Sigmoid colon (tissue), 7 donors: ENCODE measurements at regions of chr19 and their contacts with region 1.

Region 1: DNA sequence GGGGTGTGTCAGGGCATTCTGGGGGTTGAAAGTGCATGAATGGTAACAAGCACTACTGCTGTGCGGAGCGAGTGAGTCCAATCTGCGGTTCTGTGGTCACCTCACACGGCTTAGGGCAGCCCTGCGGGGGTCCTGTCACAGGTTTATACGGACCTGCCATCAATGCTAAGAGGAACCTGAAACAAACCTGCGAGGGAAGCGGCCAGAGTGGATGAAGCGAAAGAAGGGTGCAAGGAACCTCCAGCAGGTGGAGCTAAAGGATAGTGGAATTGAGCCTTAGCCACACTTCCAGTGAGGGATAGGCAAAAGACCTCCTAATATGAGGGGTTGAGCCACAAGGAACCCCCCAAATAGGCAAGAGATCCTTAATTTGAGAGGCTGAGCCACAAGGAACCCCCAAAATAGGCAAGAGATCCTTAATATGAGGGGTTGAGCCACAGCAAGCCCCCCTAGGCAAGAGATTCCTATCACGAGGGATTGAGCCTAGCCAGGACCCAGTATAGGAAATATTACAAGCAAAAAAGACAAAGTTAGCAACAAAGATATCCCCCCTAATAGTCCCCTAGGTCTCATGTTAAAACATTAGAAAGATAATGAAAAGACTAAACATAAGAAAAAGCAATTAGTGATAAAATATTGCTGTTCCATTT is 6.3 kb upstream of the ZNF69 start:
- DNase-seq: no peak
- H3K4me3 ChIP-seq: no peak overlapping the region
- H3K27ac ChIP-seq: no peak overlapping the region
- H3K4me1 ChIP-seq: peaks cover 0 to 6% (median 3%) of the 10 kb centered on the region in 4 donors
- H3K27me3 ChIP-seq: no peaks in the 10 kb centered on the region
- CTCF ChIP-seq: peak; percentile 30 to 79 (median 71)
- EP300 ChIP-seq: no peak
- POLR2A ChIP-seq: no peak

Region 2: GRCh38 chr19:11924886-11925650 is 43.8 kb after region 1 on chr19 and contains the start of gene ZNF700:
- intact Hi-C with region 1: loop called (anchors 5 kb)
- DNase-seq: peak; percentile 97
- H3K4me3 ChIP-seq: peak within 1 kb of the TSS; percentile 64 to 96 (median 81)
- H3K27ac ChIP-seq: peak within 1 kb of the TSS; percentile 84 to 97 (median 94)
- H3K4me1 ChIP-seq: peaks cover 0 to 27% (median 20%) of the 10 kb centered on the region in 4 donors
- H3K27me3 ChIP-seq: no peaks in the 10 kb centered on the region
- CTCF ChIP-seq: no peak
- EP300 ChIP-seq: no peak
- POLR2A ChIP-seq: peak; percentile 36 to 87
- total RNA-seq, gene ZNF700: 13.7 to 19.7 (median 15.0) TPM

Region 3: DNA sequence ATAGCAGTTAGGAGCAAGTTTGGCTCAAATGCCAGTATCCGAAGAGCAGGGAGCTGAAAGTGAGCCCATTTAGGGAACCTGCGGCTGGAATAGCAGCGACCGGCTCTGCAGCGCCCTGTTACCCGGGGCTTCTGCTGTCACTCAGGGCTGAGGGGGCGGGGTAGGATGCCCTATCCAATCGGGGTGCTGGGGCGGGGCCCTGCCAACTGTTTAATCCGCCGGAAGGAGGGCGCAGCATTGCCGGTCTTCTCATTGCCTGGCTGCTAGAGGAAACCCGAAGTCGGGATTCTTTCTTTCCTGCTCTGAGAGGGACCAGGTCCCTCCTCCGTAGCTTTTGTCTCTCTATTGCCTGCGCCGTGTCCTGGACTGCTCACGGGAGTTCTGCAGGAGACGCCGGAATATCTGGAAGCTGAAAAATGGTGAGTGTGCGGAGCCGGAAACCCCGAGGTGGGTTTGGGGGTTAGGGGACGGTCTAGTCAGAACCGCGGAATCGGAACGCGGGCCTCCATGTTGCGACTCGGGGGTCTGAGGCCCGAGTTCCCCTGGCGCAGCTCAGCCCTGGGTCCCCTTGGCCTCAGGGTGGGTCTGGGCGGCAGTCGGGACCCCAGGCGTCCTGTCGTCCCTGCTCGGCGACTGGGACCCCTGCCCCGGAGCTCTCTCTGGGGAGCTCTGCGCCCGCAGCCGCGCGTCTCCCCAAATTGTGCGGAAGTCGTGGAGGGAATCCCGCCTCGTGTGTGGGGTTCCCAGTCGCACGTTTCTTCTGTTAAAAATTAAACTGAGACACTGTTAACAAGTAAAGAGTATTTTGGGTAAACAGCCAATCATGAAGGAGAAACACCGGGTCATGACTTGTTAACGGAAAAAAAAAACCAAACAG is 106.4 kb after region 1 on chr19:
- intact Hi-C with region 1: loop called (anchors 1 kb)
- DNase-seq: peak; percentile 98
- H3K4me3 ChIP-seq: peak overlapping the region; percentile 66 to 85 (median 76)
- H3K27ac ChIP-seq: peak overlapping the region; percentile 92 to 95 (median 94)
- H3K4me1 ChIP-seq: peaks cover 0 to 15% (median 3%) of the 10 kb centered on the region in 4 donors
- H3K27me3 ChIP-seq: no peaks in the 10 kb centered on the region
- CTCF ChIP-seq: no peak
- EP300 ChIP-seq: no peak
- POLR2A ChIP-seq: peak; percentile 91 to 94

Region 4: GRCh38 chr19:12055783-12056182 is 174.5 kb after region 1 on chr19:
- intact Hi-C with region 1: loop called (anchors 5 kb)
- DNase-seq: no peak
- H3K4me3 ChIP-seq: no peak overlapping the region
- H3K27ac ChIP-seq: no peak overlapping the region
- H3K4me1 ChIP-seq: peaks cover 0 to 19% (median 14%) of the 10 kb centered on the region in 4 donors
- H3K27me3 ChIP-seq: no peaks in the 10 kb centered on the region
- CTCF ChIP-seq: no peak
- EP300 ChIP-seq: no peak
- POLR2A ChIP-seq: no peak